Activated T-helper 2 cell treated with anti-CD3 and anti-CD28 coated beads, Interferon-gamma antibody, Interleukin-2, Interleukin-4, amounts not matched to agents 10 μg/mL and 5 μg/mL and 100 μg/mL, durations not matched to agents 14 hours and 24 hours and 36 hours (primary cell): ENCODE measurements at regions of chr10 and their contacts with region 1.

Region 1: GRCh38 chr10:102009801-102010425 is 46.1 kb downstream of the ARMH3 start:
- DNase-seq: peak; percentile 24
- H3K4me3 Mint-ChIP-seq: no peak overlapping the region
- H3K27ac Mint-ChIP-seq: no peak overlapping the region
- H3K4me1 Mint-ChIP-seq: peaks cover 2% of the 10 kb centered on the region
- H3K27me3 Mint-ChIP-seq: no peaks in the 10 kb centered on the region

Region 2: DNA sequence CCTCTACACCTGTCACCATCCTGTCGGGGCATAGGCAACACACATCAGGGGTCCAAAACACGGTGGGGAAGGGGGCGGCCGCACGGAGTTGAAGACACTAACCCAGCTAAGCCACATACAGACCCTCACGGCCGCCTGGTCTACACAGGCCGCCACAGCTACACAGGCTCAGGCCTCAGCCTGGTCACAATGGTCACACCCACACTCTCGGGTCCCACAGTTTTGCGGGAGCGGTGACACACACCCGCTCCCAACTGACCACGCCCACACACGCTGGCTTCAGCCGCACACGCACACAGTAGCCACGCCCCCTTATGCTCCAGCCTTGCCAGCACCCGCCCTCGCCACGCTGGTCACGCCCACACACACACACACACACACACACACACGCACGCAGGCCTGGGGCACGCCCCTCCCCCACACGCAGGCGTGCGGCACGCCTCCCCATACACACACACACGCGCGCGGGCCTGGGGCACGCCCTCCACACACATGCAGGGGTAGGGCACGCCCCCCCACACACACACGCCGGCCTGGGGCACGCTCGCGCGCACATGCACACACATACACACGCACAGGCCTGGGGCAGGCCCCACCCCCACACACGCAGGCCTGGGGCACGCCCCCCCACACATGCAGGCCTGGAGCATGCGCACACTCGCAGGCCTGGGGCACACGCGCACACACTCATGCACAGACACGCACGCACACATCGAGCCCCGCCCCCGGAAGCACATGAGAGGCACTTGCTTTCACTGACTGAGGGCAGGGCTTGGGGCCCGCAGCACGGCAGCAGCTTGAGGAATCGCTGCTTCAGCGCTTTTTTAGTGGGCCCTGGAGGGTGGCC is 179.4 kb before region 1 on chr10:
- intact Hi-C with region 1: loop called (anchors 1 kb)
- DNase-seq: peak; percentile 88
- H3K4me3 Mint-ChIP-seq: peak overlapping the region; percentile 71
- H3K27ac Mint-ChIP-seq: peak overlapping the region; percentile 92
- H3K4me1 Mint-ChIP-seq: peaks cover 48% of the 10 kb centered on the region
- H3K27me3 Mint-ChIP-seq: no peaks in the 10 kb centered on the region

Region 3: GRCh38 chr10:101840741-101841453 is 169.0 kb before region 1 on chr10:
- intact Hi-C with region 1: loop called (anchors 1 kb)
- DNase-seq: peak; percentile 70
- H3K4me3 Mint-ChIP-seq: peak overlapping the region; percentile 88
- H3K27ac Mint-ChIP-seq: peak overlapping the region; percentile 77
- H3K4me1 Mint-ChIP-seq: peaks cover 36% of the 10 kb centered on the region
- H3K27me3 Mint-ChIP-seq: peaks cover 23% of the 10 kb centered on the region

Region 4: DNA sequence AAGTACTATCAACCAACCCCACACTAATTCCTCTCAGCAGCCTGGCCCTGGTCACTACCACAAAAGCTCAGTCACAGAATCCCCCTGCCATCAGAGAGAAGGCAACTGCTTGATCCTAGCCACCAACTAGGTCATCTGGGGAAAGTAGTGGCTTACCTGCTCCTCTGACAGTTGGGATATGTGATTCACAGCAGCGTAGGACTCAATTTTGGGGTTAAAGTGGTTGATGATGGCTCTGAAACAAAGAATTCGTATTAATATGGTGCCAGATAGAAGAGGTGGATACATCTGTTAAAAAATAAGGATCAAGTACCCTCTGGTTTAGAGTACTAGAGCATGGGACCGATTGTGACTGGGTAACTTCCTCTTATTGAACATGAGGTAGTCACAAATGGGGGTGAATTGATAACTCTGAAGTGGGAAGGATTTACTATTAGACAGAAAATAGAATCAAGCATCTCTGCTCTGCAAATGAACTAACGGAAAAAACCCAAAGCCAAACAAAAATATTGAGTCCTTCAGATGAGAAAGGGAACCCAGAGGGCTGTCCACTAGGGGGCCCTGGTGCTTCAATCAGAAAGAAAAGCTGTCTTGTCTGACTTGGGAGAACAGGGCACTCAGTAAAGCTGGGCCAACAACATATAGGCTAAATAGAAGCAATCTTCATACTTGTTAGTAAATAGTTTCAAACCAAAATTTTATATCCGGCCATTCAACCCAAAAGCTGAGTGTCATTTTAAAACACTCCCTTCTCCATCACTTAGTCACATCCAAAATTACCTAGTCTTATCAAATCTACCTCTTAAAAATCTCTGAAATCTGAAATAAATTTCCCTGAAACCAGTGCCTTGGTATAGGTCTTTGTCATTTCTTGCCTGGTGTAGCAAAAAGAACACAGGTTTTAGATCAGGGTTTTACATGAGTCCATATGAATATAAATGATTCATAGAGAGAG is 120.4 kb before region 1 on chr10:
- intact Hi-C with region 1: loop called (anchors 1 kb)
- DNase-seq: peak; percentile 53
- H3K4me3 Mint-ChIP-seq: no peak overlapping the region
- H3K27ac Mint-ChIP-seq: no peak overlapping the region
- H3K4me1 Mint-ChIP-seq: peaks cover 3% of the 10 kb centered on the region
- H3K27me3 Mint-ChIP-seq: no peaks in the 10 kb centered on the region